A673 (cell line): ENCODE measurements at regions of chr1 and their contacts with region 1.

Region 1: DNA sequence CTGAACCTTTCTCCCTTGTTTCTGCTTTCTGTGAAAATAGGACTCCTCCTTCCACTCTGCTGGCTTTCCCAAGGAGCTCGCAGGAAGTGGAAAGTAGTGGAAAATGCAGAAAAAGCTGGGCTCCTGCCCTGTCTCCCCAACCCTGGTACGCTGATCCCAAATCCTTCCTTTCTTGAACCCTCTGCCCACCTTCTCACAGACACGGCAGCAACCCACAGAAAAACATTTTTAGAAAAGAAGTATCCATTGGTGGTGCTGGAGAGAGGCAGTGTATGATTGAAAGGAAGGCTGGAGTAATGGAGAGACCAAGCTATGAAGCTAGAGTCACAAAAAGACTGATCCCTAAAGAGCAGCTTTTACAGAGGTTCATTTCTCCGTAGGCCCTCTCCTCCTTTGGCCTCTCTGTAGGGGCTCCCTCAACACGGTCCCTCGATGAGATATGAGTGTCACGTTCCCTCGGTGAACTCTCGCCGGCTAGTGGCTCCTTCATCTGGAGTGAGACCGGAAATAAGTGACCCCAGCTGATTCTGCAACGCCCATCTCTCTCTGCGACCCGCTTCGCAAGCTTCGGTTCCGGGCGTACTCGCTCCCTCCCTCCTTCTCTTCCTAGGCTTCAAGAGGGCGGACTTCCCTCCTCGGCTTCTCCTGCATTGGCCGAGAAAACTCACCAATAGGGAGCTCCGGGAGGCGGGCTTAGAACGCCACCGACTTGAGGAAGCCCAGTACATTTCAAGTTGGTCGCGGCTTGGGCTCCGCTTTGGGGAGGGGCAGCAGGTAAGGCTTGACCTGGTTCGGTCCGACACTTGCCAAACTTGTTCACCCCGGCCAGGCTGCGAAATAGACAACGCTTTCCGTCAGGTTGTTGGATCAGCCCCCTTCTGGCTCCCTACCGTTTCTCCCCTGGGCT is at the starts of genes ANKRD34A and POLR3GL:
- DNase-seq: peak; percentile 95
- H3K4me3 ChIP-seq: peak within 1 kb of the TSS; percentile 71
- H3K27ac ChIP-seq: peak within 1 kb of the TSS; percentile 78
- H3K4me1 ChIP-seq: peaks cover 24% of the 10 kb centered on the region
- H3K27me3 ChIP-seq: no peaks in the 10 kb centered on the region
- CTCF ChIP-seq: no peak
- total RNA-seq, gene ANKRD34A: 1.6 and 2.2 TPM in 2 replicates
- total RNA-seq, gene POLR3GL: 8.5 and 11.6 TPM in 2 replicates

Region 2: DNA sequence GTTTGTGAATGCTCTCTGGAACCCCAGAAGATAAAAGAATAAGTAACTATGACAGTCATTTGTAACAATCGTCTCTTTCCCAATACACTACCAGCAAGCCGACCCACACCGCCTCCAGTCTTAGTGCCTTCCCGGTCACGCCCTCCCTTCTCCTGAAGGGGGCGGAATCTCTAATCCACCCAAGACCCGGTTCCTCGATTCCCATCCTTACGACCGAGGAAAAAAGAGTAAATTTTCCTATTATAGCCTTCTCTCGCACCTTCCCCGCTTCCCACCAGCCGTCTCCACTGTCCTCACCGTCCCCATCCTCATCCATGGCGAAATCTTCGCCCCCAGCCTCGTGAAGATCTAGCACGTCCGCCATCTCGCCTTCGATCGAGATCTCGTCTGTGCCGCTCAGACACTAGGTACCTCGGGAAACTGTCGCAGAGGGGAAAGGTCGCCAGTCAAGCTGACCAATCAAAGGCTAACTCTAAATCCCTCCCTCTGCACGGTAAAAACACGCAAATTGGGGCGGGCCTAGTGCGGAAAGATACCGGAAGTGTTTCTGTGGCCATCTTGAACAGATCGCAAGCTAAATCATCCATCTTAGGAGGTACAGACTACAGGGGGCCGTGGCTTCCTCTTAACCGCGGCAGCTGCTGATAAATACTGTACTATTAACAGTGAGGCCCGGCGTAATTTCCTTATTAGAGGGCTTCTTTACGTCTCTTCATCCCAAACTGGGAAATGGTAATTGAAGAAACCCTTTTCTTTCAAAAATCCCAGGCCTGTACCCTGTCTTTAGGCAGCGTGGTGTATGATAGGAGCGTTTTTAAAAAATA is 37.0 kb before region 1 on chr1 and contains the start of gene RBM8A:
- CTCF ChIA-PET with region 1: no interaction called
- POLR2A ChIA-PET with region 1: interaction called, 3 read pairs
- intact Hi-C with region 1: loop called (anchors 5 kb)
- DNase-seq: peak; percentile 99
- H3K4me3 ChIP-seq: peak within 1 kb of the TSS; percentile 68
- H3K27ac ChIP-seq: peak within 1 kb of the TSS; percentile 95
- H3K4me1 ChIP-seq: peaks cover 13% of the 10 kb centered on the region
- H3K27me3 ChIP-seq: no peaks in the 10 kb centered on the region
- CTCF ChIP-seq: peak; percentile 76
- total RNA-seq, gene RBM8A: 255 and 276 TPM in 2 replicates

Region 3: DNA sequence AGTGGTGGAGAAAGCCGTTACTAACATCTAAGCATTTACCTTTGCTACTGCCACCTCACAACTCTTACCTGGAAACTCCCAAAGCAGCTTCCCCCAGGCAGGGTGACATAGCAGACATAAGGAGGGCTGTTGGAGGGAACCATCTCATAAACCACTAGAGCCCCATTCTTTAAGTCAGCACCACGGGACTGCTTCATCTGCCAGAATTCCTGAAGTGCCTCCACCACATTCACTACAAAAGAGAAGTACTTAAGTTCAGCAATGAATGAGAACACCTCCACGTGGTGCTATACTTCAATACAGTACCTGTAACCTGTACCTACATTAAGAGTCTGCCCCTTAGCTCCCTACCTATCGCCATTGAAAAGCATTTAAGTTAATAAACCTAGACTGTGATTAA is 16.7 kb before region 1 on chr1:
- CTCF ChIA-PET with region 1: no interaction called
- POLR2A ChIA-PET with region 1: no interaction called
- intact Hi-C with region 1: no loop called
- DNase-seq: no peak
- H3K4me3 ChIP-seq: no peak overlapping the region
- H3K27ac ChIP-seq: no peak overlapping the region
- H3K4me1 ChIP-seq: no peaks in the 10 kb centered on the region
- H3K27me3 ChIP-seq: no peaks in the 10 kb centered on the region
- CTCF ChIP-seq: no peak

Region 4: DNA sequence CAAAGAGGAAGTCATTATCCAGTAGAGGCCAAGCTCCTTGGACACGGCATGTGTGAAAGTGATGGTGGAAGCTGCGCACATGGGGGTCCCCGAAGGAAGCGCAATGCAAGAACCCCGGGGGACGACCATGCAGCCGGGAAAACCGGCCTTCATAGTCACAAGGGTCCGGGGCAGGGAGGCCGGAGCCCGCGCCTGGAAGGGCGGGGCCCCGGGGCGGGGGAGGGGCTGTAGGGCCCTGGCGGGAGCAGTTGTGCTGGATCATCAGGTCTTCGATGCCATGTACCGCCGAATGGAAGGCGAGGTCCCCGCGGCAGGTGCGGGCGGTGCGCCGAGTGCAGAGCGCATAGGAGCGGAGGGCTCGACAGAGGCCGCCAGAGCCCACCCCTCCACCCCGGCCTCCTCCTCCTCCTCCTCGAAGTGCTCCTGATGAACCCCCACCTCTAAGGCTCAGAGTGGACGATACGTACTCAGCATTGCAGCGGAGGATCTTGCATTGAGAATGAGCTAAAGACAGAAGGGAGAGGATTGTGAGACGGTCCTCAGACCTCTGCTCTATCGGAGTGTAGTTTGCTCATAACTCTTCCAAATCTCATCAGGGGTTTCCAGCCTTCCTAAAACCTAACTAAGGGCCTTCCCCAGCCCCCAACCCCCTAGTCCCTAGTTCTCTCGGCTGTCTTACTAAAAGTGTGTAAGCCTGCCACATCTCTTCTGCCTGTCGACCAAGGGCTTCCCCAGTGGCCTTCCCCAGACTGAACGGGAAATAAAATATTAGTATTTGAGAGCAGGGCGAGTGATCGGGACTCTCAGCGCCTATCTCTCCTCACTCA is 55.2 kb after region 1 on chr1:
- CTCF ChIA-PET with region 1: no interaction called
- POLR2A ChIA-PET with region 1: no interaction called
- intact Hi-C with region 1: no loop called
- DNase-seq: no peak
- H3K4me3 ChIP-seq: no peak overlapping the region
- H3K27ac ChIP-seq: no peak overlapping the region
- H3K4me1 ChIP-seq: peaks cover 10% of the 10 kb centered on the region
- H3K27me3 ChIP-seq: no peaks in the 10 kb centered on the region
- CTCF ChIP-seq: no peak